SK-N-SH (cell line): ENCODE measurements at regions of chr1 and their contacts with region 1.

Region 1: DNA sequence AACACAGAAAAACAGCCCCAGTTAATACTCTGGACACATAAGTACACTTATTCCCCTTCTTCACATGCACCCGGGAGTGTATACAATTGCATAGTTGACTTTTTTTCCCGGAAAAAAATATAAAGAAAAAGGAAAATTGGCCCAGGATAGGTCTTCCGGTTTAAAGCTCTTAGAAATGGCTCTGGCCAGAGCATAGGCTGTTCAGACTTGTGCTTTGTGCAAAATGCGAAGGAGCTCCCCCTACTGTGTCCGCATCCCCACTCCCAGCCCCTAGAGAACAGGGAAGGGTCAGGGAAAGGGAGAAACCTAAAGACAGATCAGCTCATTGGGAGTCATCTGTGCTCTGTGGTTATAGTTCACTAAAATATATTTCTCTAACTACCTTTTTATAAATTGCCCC is 5.5 kb upstream of the MTMR11 start:
- DNase-seq: peak; percentile 82
- H3K4me3 ChIP-seq: no peak overlapping the region
- H3K27ac ChIP-seq: peak overlapping the region; percentile 4 to 53; a peak in 3 of 4 replicates
- H3K4me1 ChIP-seq: peaks cover 19 to 25% of the 10 kb centered on the region in 2 experiments
- H3K27me3 ChIP-seq: no peaks in the 10 kb centered on the region
- CTCF ChIP-seq: peak; percentile 43
- EP300 ChIP-seq: no peak
- RAD21 ChIP-seq: peak; percentile 63

Region 2: GRCh38 chr1:149927503-149928387 is 14.5 kb before region 1 on chr1 and contains the start of gene SF3B4:
- CTCF ChIA-PET with region 1: interaction called, 10 read pairs
- POLR2A ChIA-PET with region 1: interaction called, 11 read pairs
- DNase-seq: peak; percentile 89
- H3K4me3 ChIP-seq: peak within 1 kb of the TSS; percentile 92 to 95
- H3K27ac ChIP-seq: peak within 1 kb of the TSS; percentile 90 to 99
- H3K4me1 ChIP-seq: peaks cover 14 to 26% of the 10 kb centered on the region in 2 experiments
- H3K27me3 ChIP-seq: no peaks in the 10 kb centered on the region
- CTCF ChIP-seq: no peak
- EP300 ChIP-seq: no peak
- RAD21 ChIP-seq: no peak
- polyA plus RNA-seq, gene SF3B4: 42.4 and 54.3 TPM in 2 replicates

Region 3: GRCh38 chr1:150010393-150011115 is 68.3 kb after region 1 on chr1 and contains the start of gene OTUD7B:
- CTCF ChIA-PET with region 1: no interaction called
- POLR2A ChIA-PET with region 1: no interaction called
- DNase-seq: peak; percentile 94
- H3K4me3 ChIP-seq: peak within 1 kb of the TSS; percentile 78 to 100
- H3K27ac ChIP-seq: peak within 1 kb of the TSS; percentile 93 to 98
- H3K4me1 ChIP-seq: peaks cover 19 to 25% of the 10 kb centered on the region in 2 experiments; a peak in 3 of 4 replicates
- H3K27me3 ChIP-seq: no peaks in the 10 kb centered on the region
- CTCF ChIP-seq: no peak; the same call in 1 of the 2 replicates
- EP300 ChIP-seq: peak; percentile 29 to 74; a peak in 2 of 4 replicates
- RAD21 ChIP-seq: 0 out of 2 replicates have a peak, but pooled peaks have one; percentile 8
- polyA plus RNA-seq, gene OTUD7B: 4.2 and 5.8 TPM in 2 replicates